ENCODE measurements at regions of chr21 and their contacts with region 1.

Region 1: DNA sequence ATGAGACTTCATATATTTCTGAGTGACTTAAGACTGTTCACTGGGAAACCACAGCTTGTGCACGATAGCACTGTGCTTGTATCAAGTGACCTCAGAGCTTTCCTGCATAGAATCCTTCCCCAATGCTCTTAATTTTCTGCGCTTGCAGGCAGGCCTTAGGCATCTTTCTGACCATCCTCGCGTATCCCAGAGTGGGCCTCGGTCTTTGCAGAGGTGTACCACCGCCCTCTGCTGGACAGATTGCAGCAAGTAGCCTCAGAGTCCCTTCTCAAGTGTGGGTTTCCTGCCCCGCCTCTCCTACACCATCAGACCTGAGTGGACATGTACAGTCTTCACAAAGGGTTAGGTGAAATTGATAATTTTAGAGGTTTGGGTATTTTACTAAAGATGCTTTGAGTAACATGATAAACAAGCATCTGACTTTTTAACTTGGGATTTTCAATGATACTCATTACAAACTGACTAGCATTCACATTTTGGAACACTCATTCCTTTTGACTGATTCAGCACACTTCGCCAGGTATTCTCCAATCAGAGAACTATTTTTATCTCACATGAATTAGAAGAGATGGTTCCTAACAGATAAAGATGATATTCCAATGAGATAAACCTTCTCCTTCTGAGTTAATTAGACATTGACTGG is 246.5 kb upstream of the USP25 start:
- DNase-seq: peak; percentile 84
- H3K4me3 ChIP-seq: no peak overlapping the region
- H3K27ac ChIP-seq: no peak overlapping the region
- H3K4me1 ChIP-seq: no peaks in the 10 kb centered on the region
- H3K27me3 ChIP-seq: no peaks in the 10 kb centered on the region
- CTCF ChIP-seq: peak; percentile 90

Region 2: DNA sequence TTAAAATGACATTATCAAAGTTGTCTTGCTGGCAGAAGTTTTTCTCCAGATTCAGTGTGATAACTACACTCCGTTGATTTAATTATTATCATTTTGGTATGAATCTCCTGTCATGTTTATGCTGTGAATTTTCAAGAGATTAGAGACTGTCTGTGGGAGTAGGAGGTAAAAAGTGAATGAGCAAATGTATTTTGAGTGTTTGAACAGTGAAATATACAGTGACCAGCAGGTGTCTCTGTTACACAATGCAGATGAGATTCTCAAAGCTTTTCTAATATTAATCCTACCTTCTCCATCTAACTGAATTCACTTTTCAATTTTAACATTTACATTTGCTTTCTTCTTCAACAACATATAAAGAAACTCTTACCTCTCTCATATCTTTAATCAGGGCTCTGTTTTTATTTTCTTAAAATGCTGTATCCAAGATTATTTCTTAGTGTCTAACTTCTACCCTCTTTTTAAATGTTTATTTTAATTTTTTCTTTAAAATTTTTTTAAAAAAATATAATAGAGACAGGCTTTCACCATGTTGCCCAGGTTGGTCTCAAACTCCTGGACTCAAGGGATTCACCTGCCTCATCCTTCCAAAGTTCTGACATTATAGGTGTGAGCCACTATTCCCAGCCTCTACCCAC is 1079.5 kb before region 1 on chr21:
- CTCF ChIA-PET with region 1: no interaction called
- POLR2A ChIA-PET with region 1: no interaction called
- intact Hi-C with region 1: loop called (anchors 10 kb)
- DNase-seq: peak; percentile 52
- H3K4me3 ChIP-seq: no peak overlapping the region
- H3K27ac ChIP-seq: no peak overlapping the region
- H3K4me1 ChIP-seq: no peaks in the 10 kb centered on the region
- H3K27me3 ChIP-seq: no peaks in the 10 kb centered on the region
- CTCF ChIP-seq: peak; percentile 71

Region 3: DNA sequence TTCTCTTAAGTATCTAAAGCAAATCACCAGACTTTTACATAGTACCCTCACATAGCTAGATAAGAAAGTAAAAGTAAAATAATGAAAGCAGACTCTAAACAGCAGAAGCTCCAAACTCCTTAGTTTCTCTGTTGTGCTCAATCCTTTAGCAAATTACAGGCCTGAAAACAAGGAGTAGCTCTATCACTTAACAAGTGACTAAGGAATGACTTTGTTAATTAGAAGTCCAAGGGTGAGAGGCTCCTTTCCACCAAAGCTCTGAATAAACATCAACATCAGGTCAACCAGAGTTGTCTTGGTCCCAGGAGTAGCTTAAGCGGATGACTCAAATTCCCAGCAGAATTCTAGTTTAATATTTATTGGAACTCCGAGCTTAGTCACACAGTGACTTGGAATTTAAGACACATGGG is 424.4 kb before region 1 on chr21:
- CTCF ChIA-PET with region 1: no interaction called
- POLR2A ChIA-PET with region 1: no interaction called
- intact Hi-C with region 1: loop called (anchors 1 kb)
- DNase-seq: peak; percentile 74
- H3K4me3 ChIP-seq: peak overlapping the region; percentile 22
- H3K27ac ChIP-seq: peak overlapping the region; percentile 55
- H3K4me1 ChIP-seq: peaks cover 85% of the 10 kb centered on the region
- H3K27me3 ChIP-seq: no peaks in the 10 kb centered on the region
- CTCF ChIP-seq: no peak

Region 4: GRCh38 chr21:15206514-15206913 is 276.7 kb before region 1 on chr21:
- CTCF ChIA-PET with region 1: no interaction called
- POLR2A ChIA-PET with region 1: no interaction called
- intact Hi-C with region 1: no loop called
- DNase-seq: no peak
- H3K4me3 ChIP-seq: no peak overlapping the region
- H3K27ac ChIP-seq: no peak overlapping the region
- H3K4me1 ChIP-seq: no peaks in the 10 kb centered on the region
- H3K27me3 ChIP-seq: no peaks in the 10 kb centered on the region
- CTCF ChIP-seq: no peak

Region 5: GRCh38 chr21:15592271-15592860 is 109.1 kb after region 1 on chr21:
- CTCF ChIA-PET with region 1: no interaction called
- POLR2A ChIA-PET with region 1: no interaction called
- intact Hi-C with region 1: loop called (anchors 5 kb)
- DNase-seq: peak; percentile 50
- H3K4me3 ChIP-seq: no peak overlapping the region
- H3K27ac ChIP-seq: no peak overlapping the region
- H3K4me1 ChIP-seq: no peaks in the 10 kb centered on the region
- H3K27me3 ChIP-seq: no peaks in the 10 kb centered on the region
- CTCF ChIP-seq: peak; percentile 70

Measured in A673 (cell line).